GM12878 (cell line): ENCODE measurements at regions of chr13 and their contacts with region 1.

Region 1: GRCh38 chr13:97116754-97117153 is 105.4 kb upstream of the MBNL2 start:
- DNase-seq: no peak
- ATAC-seq: peak; percentile 70
- H3K4me3 ChIP-seq: no peak overlapping the region
- H3K27ac ChIP-seq: no peak overlapping the region
- H3K4me1 ChIP-seq: no peaks in the 10 kb centered on the region
- H3K27me3 ChIP-seq: no peaks in the 10 kb centered on the region; a peak in 1 of 4 replicates
- CTCF ChIP-seq: no peak
- EP300 ChIP-seq: no peak
- POLR2A ChIP-seq: no peak
- RAD21 ChIP-seq: no peak

Region 2: GRCh38 chr13:97353927-97354675 is 237.3 kb after region 1 on chr13:
- CTCF ChIA-PET with region 1: interaction called, 135 read pairs
- POLR2A ChIA-PET with region 1: interaction called, 3 read pairs
- RAD21 ChIA-PET with region 1: interaction called, 74 read pairs
- SMC1A ChIA-PET with region 1: interaction called, 99 read pairs
- in situ Hi-C with region 1: loop called (anchors 5 kb)
- intact Hi-C with region 1: no loop called
- DNase-seq: no peak
- ATAC-seq: no peak
- H3K4me3 ChIP-seq: no peak overlapping the region
- H3K27ac ChIP-seq: no peak overlapping the region
- H3K4me1 ChIP-seq: no peaks in the 10 kb centered on the region
- H3K27me3 ChIP-seq: no peaks in the 10 kb centered on the region
- CTCF ChIP-seq: no peak
- EP300 ChIP-seq: no peak
- POLR2A ChIP-seq: no peak
- RAD21 ChIP-seq: no peak